Activated B cell treated with CpG ODN at 0.5 μM for 24 hours (primary cell): ENCODE measurements at regions of chr7 and their contacts with region 1.

Region 1: DNA sequence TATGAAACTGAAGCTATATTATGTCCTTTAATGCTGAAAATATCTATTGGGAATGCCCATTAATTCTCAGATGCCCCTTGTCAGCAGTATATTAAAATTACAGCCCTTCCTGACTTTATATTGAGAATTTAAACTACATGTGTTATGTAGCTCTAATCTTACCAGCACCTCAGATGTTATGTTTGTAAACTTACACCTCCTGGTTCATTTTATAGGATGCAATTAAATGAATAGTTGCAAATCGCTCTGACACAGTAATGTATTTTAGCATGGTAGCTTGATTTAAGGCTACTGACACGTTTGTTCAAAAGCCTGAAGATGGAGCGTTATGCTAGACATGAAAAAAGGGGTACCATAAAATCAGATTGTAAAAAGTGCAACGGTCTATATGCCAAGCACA is 35.0 kb upstream of the MET start:
- DNase-seq: no peak
- ATAC-seq: no peak
- H3K4me3 Mint-ChIP-seq: no peak overlapping the region
- H3K27ac Mint-ChIP-seq: no peak overlapping the region
- H3K4me1 Mint-ChIP-seq: peaks cover 11% of the 10 kb centered on the region
- H3K27me3 Mint-ChIP-seq: no peaks in the 10 kb centered on the region
- CTCF ChIP-seq: no peak

Region 2: GRCh38 chr7:116249708-116250553 is 387.1 kb before region 1 on chr7:
- CTCF ChIA-PET with region 1: no interaction called
- POLR2A ChIA-PET with region 1: no interaction called
- intact Hi-C with region 1: no loop called
- DNase-seq: no peak
- ATAC-seq: peak; percentile 49
- H3K4me3 Mint-ChIP-seq: no peak overlapping the region
- H3K27ac Mint-ChIP-seq: no peak overlapping the region
- H3K4me1 Mint-ChIP-seq: peaks cover 5% of the 10 kb centered on the region
- H3K27me3 Mint-ChIP-seq: no peaks in the 10 kb centered on the region
- CTCF ChIP-seq: no peak

Region 3: GRCh38 chr7:116653646-116654045 is 16.6 kb after region 1 on chr7:
- CTCF ChIA-PET with region 1: no interaction called
- POLR2A ChIA-PET with region 1: no interaction called
- intact Hi-C with region 1: loop called (anchors 2 kb)
- DNase-seq: no peak
- ATAC-seq: no peak
- H3K4me3 Mint-ChIP-seq: no peak overlapping the region
- H3K27ac Mint-ChIP-seq: no peak overlapping the region
- H3K4me1 Mint-ChIP-seq: no peaks in the 10 kb centered on the region
- H3K27me3 Mint-ChIP-seq: peaks cover 25% of the 10 kb centered on the region
- CTCF ChIP-seq: no peak